ENCODE measurements at regions of chr10 and their contacts with region 1.

Region 1: GRCh38 chr10:99612167-99612831 is 7.9 kb downstream of the SLC25A28 start:
- DNase-seq: peak in 6 of 9 experiments; percentile 5 to 73 (median 29)
- ATAC-seq: peak; percentile 75
- H3K4me3 ChIP-seq: no peak overlapping the region
- H3K4me3 Mint-ChIP-seq: no peak overlapping the region
- H3K27ac ChIP-seq: peak overlapping the region in 1 of 2 experiments; percentile 12
- H3K27ac Mint-ChIP-seq: peak overlapping the region; percentile 37
- H3K4me1 ChIP-seq: peaks cover 5% of the 10 kb centered on the region
- H3K4me1 Mint-ChIP-seq: peaks cover 27% of the 10 kb centered on the region
- H3K27me3 ChIP-seq: no peaks in the 10 kb centered on the region
- H3K27me3 Mint-ChIP-seq: no peaks in the 10 kb centered on the region
- CTCF ChIP-seq: peak; percentile 91

Region 2: GRCh38 chr10:99430451-99431189 is 181.7 kb before region 1 on chr10 and contains the start of gene GOT1:
- CTCF ChIA-PET with region 1: interaction called, 21 read pairs
- POLR2A ChIA-PET with region 1: interaction called, 4 read pairs
- intact Hi-C with region 1: loop called in 1 of 2 experiments (anchors 2 kb)
- DNase-seq: peak; percentile 83 to 98 (median 89)
- ATAC-seq: peak; percentile 92
- H3K4me3 ChIP-seq: peak within 1 kb of the TSS; percentile 81 to 96
- H3K4me3 Mint-ChIP-seq: peak within 1 kb of the TSS; percentile 98
- H3K27ac ChIP-seq: peak within 1 kb of the TSS; percentile 66 to 81
- H3K27ac Mint-ChIP-seq: peak within 1 kb of the TSS; percentile 96
- H3K4me1 ChIP-seq: peaks cover 21% of the 10 kb centered on the region
- H3K4me1 Mint-ChIP-seq: peaks cover 40% of the 10 kb centered on the region
- H3K27me3 ChIP-seq: no peaks in the 10 kb centered on the region
- H3K27me3 Mint-ChIP-seq: no peaks in the 10 kb centered on the region
- CTCF ChIP-seq: no peak
- total RNA-seq, gene GOT1: 7.2 to 8.6 TPM

Region 3: GRCh38 chr10:99435986-99436638 is 176.2 kb before region 1 on chr10:
- CTCF ChIA-PET with region 1: interaction called, 21 read pairs
- POLR2A ChIA-PET with region 1: no interaction called
- intact Hi-C with region 1: loop called (anchors 1 to 2 kb)
- DNase-seq: peak in 2 of 9 experiments; percentile 51 to 58
- ATAC-seq: peak; percentile 62
- H3K4me3 ChIP-seq: no peak overlapping the region
- H3K4me3 Mint-ChIP-seq: no peak overlapping the region
- H3K27ac ChIP-seq: no peak overlapping the region
- H3K27ac Mint-ChIP-seq: no peak overlapping the region
- H3K4me1 ChIP-seq: peaks cover 10% of the 10 kb centered on the region
- H3K4me1 Mint-ChIP-seq: peaks cover 25% of the 10 kb centered on the region
- H3K27me3 ChIP-seq: no peaks in the 10 kb centered on the region
- H3K27me3 Mint-ChIP-seq: no peaks in the 10 kb centered on the region
- CTCF ChIP-seq: peak; percentile 80

Region 4: DNA sequence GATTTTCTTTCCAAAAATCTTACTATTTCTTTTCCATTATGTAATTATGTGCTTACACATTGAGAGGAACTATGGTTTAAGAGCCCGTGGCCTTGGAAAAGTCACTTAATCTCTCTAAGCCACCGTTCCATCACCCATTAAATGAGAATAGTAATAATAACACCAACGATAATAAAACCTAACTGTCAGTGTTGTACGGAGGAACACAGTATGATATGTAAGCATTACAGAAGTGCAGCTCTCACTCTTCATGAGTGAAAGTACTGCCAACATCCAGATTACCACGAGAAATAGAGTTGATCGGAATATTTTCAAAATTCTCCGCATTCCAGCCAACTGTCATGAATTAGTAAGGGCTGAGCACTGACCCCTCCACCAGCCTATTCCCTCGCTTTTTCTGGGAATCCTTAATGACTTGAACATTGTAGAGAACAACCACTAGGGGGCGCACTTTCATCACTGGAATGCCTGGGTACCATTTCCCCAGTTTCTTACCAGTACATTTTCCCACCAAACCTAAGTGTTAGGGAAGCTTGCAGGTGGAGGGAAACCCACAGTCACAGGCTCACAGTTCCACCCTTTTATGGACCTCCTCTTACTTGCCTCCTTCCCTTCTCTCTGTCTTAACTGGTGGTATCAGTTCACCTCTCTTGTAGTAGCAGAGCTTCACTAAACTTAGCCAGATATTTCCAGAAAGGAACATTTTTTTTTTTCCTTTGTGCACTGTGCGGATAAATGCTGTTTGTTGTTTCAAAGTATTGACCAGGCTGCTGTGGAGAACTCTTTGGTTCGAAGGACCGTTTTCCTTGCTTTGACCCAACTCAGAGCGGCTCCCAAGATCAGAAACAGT is 51.8 kb before region 1 on chr10:
- CTCF ChIA-PET with region 1: interaction called, 3 read pairs
- POLR2A ChIA-PET with region 1: no interaction called
- intact Hi-C with region 1: loop called in 1 of 2 experiments (anchors 1 kb)
- DNase-seq: peak in 7 of 9 experiments; percentile 7 to 56 (median 45)
- ATAC-seq: no peak
- H3K4me3 ChIP-seq: no peak overlapping the region
- H3K4me3 Mint-ChIP-seq: no peak overlapping the region
- H3K27ac ChIP-seq: no peak overlapping the region
- H3K27ac Mint-ChIP-seq: no peak overlapping the region
- H3K4me1 ChIP-seq: no peaks in the 10 kb centered on the region
- H3K4me1 Mint-ChIP-seq: peaks cover 6% of the 10 kb centered on the region
- H3K27me3 ChIP-seq: no peaks in the 10 kb centered on the region
- H3K27me3 Mint-ChIP-seq: peaks cover 21% of the 10 kb centered on the region
- CTCF ChIP-seq: peak; percentile 74

Region 5: DNA sequence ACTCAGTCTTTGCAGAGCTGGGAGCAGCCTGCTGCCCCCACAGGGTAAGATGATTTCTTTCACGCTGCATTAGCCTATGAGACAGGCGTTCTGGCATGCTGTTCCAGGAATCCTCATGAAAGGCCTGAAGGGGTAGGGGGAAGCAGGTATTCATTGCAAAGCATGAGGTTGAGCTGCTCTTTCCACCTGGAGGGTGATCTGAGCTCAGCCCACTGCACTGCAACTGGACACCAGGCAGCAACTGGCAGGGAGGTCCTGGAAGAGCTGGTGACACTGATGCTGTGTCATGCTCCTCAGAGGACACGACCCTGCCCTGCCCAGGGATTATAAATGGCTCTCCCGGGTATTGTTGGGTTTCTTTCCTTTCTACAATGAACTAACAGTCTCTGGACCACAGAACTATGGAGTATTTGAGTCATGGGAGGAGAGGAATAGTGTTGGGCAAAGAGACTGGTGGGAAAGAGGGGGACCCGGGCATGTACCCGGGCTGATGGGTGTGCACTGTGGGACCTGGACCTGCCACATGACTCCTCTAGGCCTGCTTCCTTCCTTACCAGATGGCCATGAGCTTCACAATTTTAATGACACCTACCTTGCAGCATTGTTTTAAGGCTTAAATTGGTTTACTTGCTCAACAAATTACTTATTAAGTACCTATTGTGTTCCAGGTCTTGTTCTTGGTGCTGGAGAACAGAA is 16.4 kb before region 1 on chr10:
- CTCF ChIA-PET with region 1: interaction called, 22 read pairs
- POLR2A ChIA-PET with region 1: no interaction called
- intact Hi-C with region 1: no loop called
- DNase-seq: no peak
- ATAC-seq: no peak
- H3K4me3 ChIP-seq: no peak overlapping the region
- H3K4me3 Mint-ChIP-seq: no peak overlapping the region
- H3K27ac ChIP-seq: no peak overlapping the region
- H3K27ac Mint-ChIP-seq: no peak overlapping the region
- H3K4me1 ChIP-seq: no peaks in the 10 kb centered on the region
- H3K4me1 Mint-ChIP-seq: no peaks in the 10 kb centered on the region
- H3K27me3 ChIP-seq: no peaks in the 10 kb centered on the region
- H3K27me3 Mint-ChIP-seq: peaks cover 4% of the 10 kb centered on the region
- CTCF ChIP-seq: no peak

Measured in CD8-positive, alpha-beta T cell (primary cell).